ENCODE measurements at regions of chr2 and their contacts with region 1.

Region 1: DNA sequence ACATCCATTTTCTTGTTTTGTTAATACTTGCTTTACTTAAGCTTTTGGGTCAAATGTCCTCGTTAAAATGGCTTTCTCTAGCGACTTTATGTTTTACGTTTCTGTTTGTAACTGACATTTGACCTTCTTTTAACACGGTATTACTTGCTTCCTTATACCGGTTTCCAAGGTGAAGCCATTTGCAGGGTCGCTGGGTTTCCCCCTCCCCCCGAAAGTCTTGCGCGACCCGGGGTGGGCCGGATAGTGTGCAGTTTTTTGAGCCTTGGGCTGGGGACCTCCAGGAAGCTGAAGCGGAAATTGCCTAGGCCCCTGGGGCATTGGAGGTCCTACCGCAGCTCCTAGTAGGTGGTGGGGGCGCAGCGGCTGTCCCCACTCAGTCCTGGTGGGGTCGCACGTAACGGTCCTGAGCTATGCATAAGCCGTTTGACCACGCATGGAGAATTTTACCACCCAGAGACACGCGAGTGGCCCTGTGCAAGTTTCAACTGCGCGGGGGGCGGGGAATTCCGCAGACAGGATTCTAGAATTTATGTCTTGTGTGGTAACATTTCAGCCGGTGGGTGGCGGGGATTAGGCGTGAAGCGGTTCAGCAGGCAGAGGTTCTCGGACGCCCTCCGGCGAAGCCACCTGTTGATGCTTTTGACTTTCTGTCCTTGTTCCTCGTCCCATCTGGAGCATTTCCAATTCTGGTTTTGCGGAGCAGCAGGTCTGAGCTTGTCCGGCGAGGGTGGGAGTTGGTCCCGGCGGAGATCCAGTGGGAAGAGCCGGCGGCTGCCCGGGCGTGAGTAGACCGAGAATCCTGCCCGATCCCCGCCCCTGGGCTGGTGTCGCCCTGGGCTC is 2.4 kb downstream of the CFLAR start:
- DNase-seq: peak; percentile 75 to 94 (median 78)
- H3K4me3 ChIP-seq: peak overlapping the region; percentile 78 to 98
- H3K4me3 Mint-ChIP-seq: peak overlapping the region; percentile 93 to 100 (median 100)
- H3K27ac ChIP-seq: peak overlapping the region; percentile 91
- H3K27ac Mint-ChIP-seq: peak overlapping the region; percentile 92 to 100 (median 99)
- H3K4me1 ChIP-seq: peaks cover 55% of the 10 kb centered on the region
- H3K4me1 Mint-ChIP-seq: peaks cover 34 to 87% (median 47%) of the 10 kb centered on the region in 4 donors
- H3K27me3 ChIP-seq: no peaks in the 10 kb centered on the region
- H3K27me3 Mint-ChIP-seq: peaks cover 0 to 2% of the 10 kb centered on the region in 2 donors

Region 2: GRCh38 chr2:199861132-199861774 is 1257.1 kb before region 1 on chr2:
- CTCF ChIA-PET with region 1: no interaction called
- POLR2A ChIA-PET with region 1: no interaction called
- intact Hi-C with region 1: no loop called
- DNase-seq: peak in 4 of 5 donors; percentile 5 to 11 (median 6)
- H3K4me3 ChIP-seq: no peak overlapping the region
- H3K4me3 Mint-ChIP-seq: no peak overlapping the region
- H3K27ac ChIP-seq: no peak overlapping the region
- H3K27ac Mint-ChIP-seq: no peak overlapping the region
- H3K4me1 ChIP-seq: no peaks in the 10 kb centered on the region
- H3K4me1 Mint-ChIP-seq: peaks cover 0 to 1% (median 0%) of the 10 kb centered on the region in 4 donors
- H3K27me3 ChIP-seq: peaks cover 4% of the 10 kb centered on the region
- H3K27me3 Mint-ChIP-seq: peaks cover 13 to 20% of the 10 kb centered on the region in 2 donors

Region 3: GRCh38 chr2:200713003-200713703 is 405.2 kb before region 1 on chr2:
- CTCF ChIA-PET with region 1: interaction called, 3 read pairs
- POLR2A ChIA-PET with region 1: interaction called, 13 read pairs
- intact Hi-C with region 1: loop called (anchors 2 kb)
- DNase-seq: peak; percentile 92 to 98 (median 95)
- H3K4me3 ChIP-seq: peak overlapping the region in 1 of 2 donors; percentile 35
- H3K4me3 Mint-ChIP-seq: peak overlapping the region; percentile 78 to 86 (median 84)
- H3K27ac ChIP-seq: peak overlapping the region; percentile 78
- H3K27ac Mint-ChIP-seq: peak overlapping the region; percentile 98 to 99 (median 98)
- H3K4me1 ChIP-seq: peaks cover 14% of the 10 kb centered on the region
- H3K4me1 Mint-ChIP-seq: peaks cover 8 to 13% (median 11%) of the 10 kb centered on the region in 4 donors
- H3K27me3 ChIP-seq: no peaks in the 10 kb centered on the region
- H3K27me3 Mint-ChIP-seq: no peaks in the 10 kb centered on the region

Region 4: GRCh38 chr2:200888704-200889625 is 229.4 kb before region 1 on chr2 and contains the starts of genes NIF3L1 and PPIL3:
- CTCF ChIA-PET with region 1: no interaction called
- POLR2A ChIA-PET with region 1: interaction called, 55 read pairs
- intact Hi-C with region 1: loop called (anchors 1 kb)
- DNase-seq: peak; percentile 96 to 98 (median 96)
- H3K4me3 ChIP-seq: peak within 1 kb of the TSS; percentile 91 to 92
- H3K4me3 Mint-ChIP-seq: peak within 1 kb of the TSS; percentile 90 to 98 (median 96)
- H3K27ac ChIP-seq: peak within 1 kb of the TSS; percentile 85
- H3K27ac Mint-ChIP-seq: peak within 1 kb of the TSS; percentile 98 to 100 (median 99)
- H3K4me1 ChIP-seq: peaks cover 31% of the 10 kb centered on the region
- H3K4me1 Mint-ChIP-seq: peaks cover 30 to 57% (median 45%) of the 10 kb centered on the region in 4 donors
- H3K27me3 ChIP-seq: no peaks in the 10 kb centered on the region
- H3K27me3 Mint-ChIP-seq: no peaks in the 10 kb centered on the region
- total RNA-seq, gene NIF3L1: 30.0 to 30.3 TPM
- total RNA-seq, gene PPIL3: 48.0 to 57.7 TPM

Region 5: GRCh38 chr2:201071479-201072200 is 46.7 kb before region 1 on chr2 and contains the starts of genes HYCC2 and NDUFB3:
- CTCF ChIA-PET with region 1: interaction called, 61 read pairs
- POLR2A ChIA-PET with region 1: interaction called, 101 read pairs
- intact Hi-C with region 1: loop called (anchors 1 kb)
- DNase-seq: peak; percentile 95 to 96 (median 95)
- H3K4me3 ChIP-seq: peak within 1 kb of the TSS; percentile 94 to 96
- H3K4me3 Mint-ChIP-seq: peak within 1 kb of the TSS; percentile 91 to 100 (median 98)
- H3K27ac ChIP-seq: peak within 1 kb of the TSS; percentile 79
- H3K27ac Mint-ChIP-seq: peak within 1 kb of the TSS; percentile 94 to 99 (median 98)
- H3K4me1 ChIP-seq: peaks cover 52% of the 10 kb centered on the region
- H3K4me1 Mint-ChIP-seq: peaks cover 35 to 62% (median 46%) of the 10 kb centered on the region in 4 donors
- H3K27me3 ChIP-seq: no peaks in the 10 kb centered on the region
- H3K27me3 Mint-ChIP-seq: peaks cover 0 to 2% of the 10 kb centered on the region in 2 donors
- total RNA-seq, gene HYCC2: 33.1 to 36.4 TPM
- total RNA-seq, gene NDUFB3: 48.7 to 53.6 TPM

Region 6: DNA sequence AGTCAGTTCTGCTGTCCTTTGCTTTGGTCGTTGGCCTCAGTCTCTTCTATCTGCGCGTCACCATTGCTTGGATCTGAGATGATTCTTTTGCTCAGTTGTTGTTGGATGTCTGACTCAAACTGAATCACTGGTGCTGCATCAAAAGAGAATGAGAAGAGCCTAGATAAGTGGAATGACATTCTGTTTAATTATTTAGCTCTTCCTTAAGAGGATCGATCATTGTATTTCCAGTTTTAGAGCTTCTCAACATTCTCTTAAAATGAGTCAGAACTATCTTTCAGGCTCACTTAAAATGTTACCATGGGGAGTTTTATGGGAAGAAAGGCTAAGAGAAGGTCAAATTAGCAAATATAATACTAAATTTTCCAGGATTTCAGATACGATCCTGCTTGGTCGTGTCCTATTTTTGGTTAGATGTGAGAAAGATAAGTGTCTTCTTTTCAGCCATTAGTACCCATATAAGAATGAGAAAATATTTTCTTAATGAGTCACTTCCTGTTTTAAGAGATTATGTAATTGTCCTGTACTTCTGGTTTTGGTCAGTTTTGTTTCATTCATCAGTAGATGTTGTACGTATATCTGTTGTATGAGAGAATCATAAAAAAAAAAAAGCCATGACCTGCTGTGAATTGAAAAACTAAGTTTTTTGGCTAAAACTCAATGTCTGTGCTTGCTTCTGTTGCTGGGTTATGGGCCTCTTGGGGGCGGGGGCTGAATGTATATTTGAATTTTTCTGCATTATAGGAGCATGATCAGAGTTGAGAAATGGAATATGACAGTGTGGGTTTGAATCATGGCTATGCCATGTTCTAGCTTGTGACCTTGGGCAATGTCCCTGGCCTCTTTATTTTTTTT is 33.0 kb after region 1 on chr2:
- CTCF ChIA-PET with region 1: interaction called, 28 read pairs
- POLR2A ChIA-PET with region 1: interaction called, 84 read pairs
- intact Hi-C with region 1: no loop called
- DNase-seq: no peak
- H3K4me3 ChIP-seq: no peak overlapping the region
- H3K4me3 Mint-ChIP-seq: peak overlapping the region in 4 of 8 donors; percentile 31 to 47 (median 40)
- H3K27ac ChIP-seq: peak overlapping the region; percentile 44
- H3K27ac Mint-ChIP-seq: peak overlapping the region; percentile 59 to 88 (median 82)
- H3K4me1 ChIP-seq: peaks cover 27% of the 10 kb centered on the region
- H3K4me1 Mint-ChIP-seq: peaks cover 28 to 46% (median 36%) of the 10 kb centered on the region in 4 donors
- H3K27me3 ChIP-seq: no peaks in the 10 kb centered on the region
- H3K27me3 Mint-ChIP-seq: no peaks in the 10 kb centered on the region

Region 7: GRCh38 chr2:201182650-201183364 is 64.5 kb after region 1 on chr2 and contains the start of gene CASP10:
- CTCF ChIA-PET with region 1: interaction called, 10 read pairs
- POLR2A ChIA-PET with region 1: interaction called, 31 read pairs
- intact Hi-C with region 1: loop called (anchors 5 kb)
- DNase-seq: peak; percentile 62 to 81 (median 76)
- H3K4me3 ChIP-seq: peak within 1 kb of the TSS; percentile 54 to 87
- H3K4me3 Mint-ChIP-seq: peak within 1 kb of the TSS; percentile 90 to 99 (median 96)
- H3K27ac ChIP-seq: peak within 1 kb of the TSS; percentile 75
- H3K27ac Mint-ChIP-seq: peak within 1 kb of the TSS; percentile 92 to 98 (median 96)
- H3K4me1 ChIP-seq: peaks cover 37% of the 10 kb centered on the region
- H3K4me1 Mint-ChIP-seq: peaks cover 28 to 54% (median 40%) of the 10 kb centered on the region in 4 donors
- H3K27me3 ChIP-seq: no peaks in the 10 kb centered on the region
- H3K27me3 Mint-ChIP-seq: no peaks in the 10 kb centered on the region
- total RNA-seq, gene CASP10: 30.6 to 36.6 TPM

Region 8: GRCh38 chr2:201285499-201285898 is 167.2 kb after region 1 on chr2:
- CTCF ChIA-PET with region 1: no interaction called
- POLR2A ChIA-PET with region 1: no interaction called
- intact Hi-C with region 1: no loop called
- DNase-seq: no peak
- H3K4me3 ChIP-seq: no peak overlapping the region
- H3K4me3 Mint-ChIP-seq: no peak overlapping the region
- H3K27ac ChIP-seq: no peak overlapping the region
- H3K27ac Mint-ChIP-seq: peak overlapping the region in 4 of 7 donors; percentile 2 to 78 (median 42)
- H3K4me1 ChIP-seq: no peaks in the 10 kb centered on the region
- H3K4me1 Mint-ChIP-seq: peaks cover 10 to 26% (median 13%) of the 10 kb centered on the region in 4 donors
- H3K27me3 ChIP-seq: no peaks in the 10 kb centered on the region
- H3K27me3 Mint-ChIP-seq: no peaks in the 10 kb centered on the region

Region 9: GRCh38 chr2:201451292-201452057 is 333.1 kb after region 1 on chr2 and contains the starts of genes STRADB and TRAK2:
- CTCF ChIA-PET with region 1: no interaction called
- POLR2A ChIA-PET with region 1: interaction called, 8 read pairs
- intact Hi-C with region 1: loop called (anchors 5 kb)
- DNase-seq: peak; percentile 93 to 98 (median 95)
- H3K4me3 ChIP-seq: peak within 1 kb of the TSS; percentile 38 to 93
- H3K4me3 Mint-ChIP-seq: peak within 1 kb of the TSS; percentile 94 to 99 (median 98)
- H3K27ac ChIP-seq: peak within 1 kb of the TSS; percentile 74
- H3K27ac Mint-ChIP-seq: peak within 1 kb of the TSS; percentile 95 to 98 (median 97)
- H3K4me1 ChIP-seq: peaks cover 49% of the 10 kb centered on the region
- H3K4me1 Mint-ChIP-seq: peaks cover 29 to 52% (median 41%) of the 10 kb centered on the region in 4 donors
- H3K27me3 ChIP-seq: no peaks in the 10 kb centered on the region
- H3K27me3 Mint-ChIP-seq: no peaks in the 10 kb centered on the region
- total RNA-seq, gene STRADB: 17.3 to 20.9 TPM
- total RNA-seq, gene TRAK2: 46.8 to 47.3 TPM